Naive thymus-derived CD4-positive, alpha-beta T cell (primary cell): ENCODE measurements at regions of chr9 and their contacts with region 1.

Region 1: GRCh38 chr9:122991370-122991830 is 42.1 kb upstream of the GPR21 start:
- DNase-seq: peak in 8 of 9 donors; percentile 1 to 37 (median 14)
- ATAC-seq: peak; percentile 81
- H3K4me3 ChIP-seq: no peak overlapping the region
- H3K4me3 Mint-ChIP-seq: no peak overlapping the region
- H3K27ac ChIP-seq: no peak overlapping the region
- H3K27ac Mint-ChIP-seq: no peak overlapping the region
- H3K4me1 ChIP-seq: no peaks in the 10 kb centered on the region
- H3K4me1 Mint-ChIP-seq: peaks cover 0 to 6% (median 4%) of the 10 kb centered on the region in 7 donors
- H3K27me3 ChIP-seq: no peaks in the 10 kb centered on the region
- H3K27me3 Mint-ChIP-seq: no peaks in the 10 kb centered on the region

Region 2: DNA sequence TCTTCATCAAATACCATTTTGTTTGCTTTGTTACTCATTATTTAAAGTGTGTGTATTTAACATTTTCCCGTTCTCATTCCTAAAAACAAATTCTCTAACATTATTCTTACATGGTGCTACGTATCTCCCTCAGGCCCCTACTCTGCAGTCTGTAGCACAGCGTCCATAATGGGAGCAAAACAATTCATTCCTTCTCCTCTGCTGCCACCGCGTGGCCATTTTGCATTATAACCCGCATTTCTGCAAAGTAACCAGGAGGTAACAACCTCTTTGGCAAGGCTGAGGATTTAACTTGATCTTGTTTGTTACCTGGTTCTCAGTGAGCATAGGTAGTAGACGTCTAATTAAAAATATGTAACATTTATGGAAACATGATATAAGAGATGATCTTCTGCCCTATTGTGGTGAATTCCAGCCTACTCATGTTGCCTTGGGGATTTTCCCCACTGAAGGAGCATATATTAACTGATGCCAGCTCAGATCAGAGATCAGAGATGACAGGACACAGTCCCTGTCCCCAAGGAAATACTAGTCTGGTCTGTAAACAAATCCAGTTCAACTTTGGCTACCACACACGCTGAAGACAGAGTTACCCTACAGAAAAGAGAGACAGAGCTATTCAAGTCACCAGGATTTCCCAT is 181.0 kb before region 1 on chr9:
- CTCF ChIA-PET with region 1: no interaction called
- POLR2A ChIA-PET with region 1: no interaction called
- intact Hi-C with region 1: loop called (anchors 1 to 5 kb)
- DNase-seq: peak; percentile 52 to 79 (median 72)
- ATAC-seq: peak; percentile 95
- H3K4me3 ChIP-seq: no peak overlapping the region
- H3K4me3 Mint-ChIP-seq: no peak overlapping the region
- H3K27ac ChIP-seq: no peak overlapping the region
- H3K27ac Mint-ChIP-seq: no peak overlapping the region
- H3K4me1 ChIP-seq: peaks cover 0 to under 1% of the 10 kb centered on the region in 2 donors
- H3K4me1 Mint-ChIP-seq: peaks cover 9 to 24% (median 16%) of the 10 kb centered on the region in 7 donors
- H3K27me3 ChIP-seq: no peaks in the 10 kb centered on the region
- H3K27me3 Mint-ChIP-seq: no peaks in the 10 kb centered on the region

Region 3: GRCh38 chr9:122940603-122941559 is 50.5 kb before region 1 on chr9 and contains the start of gene RABGAP1:
- CTCF ChIA-PET with region 1: interaction called, 3 read pairs
- POLR2A ChIA-PET with region 1: no interaction called
- intact Hi-C with region 1: loop called (anchors 2 to 5 kb)
- DNase-seq: peak; percentile 89 to 98 (median 94)
- ATAC-seq: peak; percentile 99
- H3K4me3 ChIP-seq: peak within 1 kb of the TSS; percentile 84
- H3K4me3 Mint-ChIP-seq: peak within 1 kb of the TSS; percentile 90 to 99 (median 96)
- H3K27ac ChIP-seq: peak within 1 kb of the TSS; percentile 89
- H3K27ac Mint-ChIP-seq: peak within 1 kb of the TSS; percentile 80 to 98 (median 94)
- H3K4me1 ChIP-seq: peaks cover 10 to 12% of the 10 kb centered on the region in 2 donors
- H3K4me1 Mint-ChIP-seq: peaks cover 18 to 47% (median 39%) of the 10 kb centered on the region in 7 donors
- H3K27me3 ChIP-seq: no peaks in the 10 kb centered on the region
- H3K27me3 Mint-ChIP-seq: no peaks in the 10 kb centered on the region
- total RNA-seq, gene RABGAP1: 33.8 to 45.7 (median 45.0) TPM

Region 4: DNA sequence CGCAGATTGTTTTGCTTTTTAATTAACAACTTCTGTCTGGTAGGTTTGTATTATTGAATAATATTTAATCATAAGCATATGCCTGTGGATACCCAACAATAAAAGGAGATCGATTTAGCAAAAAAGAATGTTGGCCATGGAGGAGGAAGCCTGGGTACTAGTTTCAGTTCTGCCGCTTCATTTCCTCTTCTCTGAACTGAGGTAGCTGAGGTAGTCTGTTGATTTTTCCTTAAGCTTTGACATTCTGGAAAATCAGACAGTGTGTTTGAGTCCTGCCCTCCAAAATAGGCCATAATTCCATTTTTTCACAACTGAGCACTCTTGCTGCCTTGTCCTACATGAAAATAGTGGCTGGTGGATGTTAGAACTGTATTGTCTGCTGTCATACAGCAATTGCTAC is 36.1 kb after region 1 on chr9:
- CTCF ChIA-PET with region 1: no interaction called
- POLR2A ChIA-PET with region 1: no interaction called
- intact Hi-C with region 1: no loop called
- DNase-seq: no peak
- ATAC-seq: no peak
- H3K4me3 ChIP-seq: no peak overlapping the region
- H3K4me3 Mint-ChIP-seq: no peak overlapping the region
- H3K27ac ChIP-seq: no peak overlapping the region
- H3K27ac Mint-ChIP-seq: no peak overlapping the region
- H3K4me1 ChIP-seq: no peaks in the 10 kb centered on the region
- H3K4me1 Mint-ChIP-seq: peaks cover 0 to 8% (median 2%) of the 10 kb centered on the region in 7 donors
- H3K27me3 ChIP-seq: no peaks in the 10 kb centered on the region
- H3K27me3 Mint-ChIP-seq: no peaks in the 10 kb centered on the region